Pancreas (tissue), 10 donors: ENCODE measurements at regions of chr4 and their contacts with region 1.

Region 1: GRCh38 chr4:26081795-26082498 is 167.9 kb downstream of the SMIM20 start:
- DNase-seq: no peak
- ATAC-seq: peak; percentile 49 to 73 (median 72)
- H3K4me3 ChIP-seq: no peak overlapping the region
- H3K27ac ChIP-seq: no peak overlapping the region
- H3K4me1 ChIP-seq: peaks cover 0 to 12% (median 0%) of the 10 kb centered on the region in 3 donors
- H3K27me3 ChIP-seq: no peaks in the 10 kb centered on the region
- CTCF ChIP-seq: peak; percentile 37 to 81 (median 66)

Region 2: DNA sequence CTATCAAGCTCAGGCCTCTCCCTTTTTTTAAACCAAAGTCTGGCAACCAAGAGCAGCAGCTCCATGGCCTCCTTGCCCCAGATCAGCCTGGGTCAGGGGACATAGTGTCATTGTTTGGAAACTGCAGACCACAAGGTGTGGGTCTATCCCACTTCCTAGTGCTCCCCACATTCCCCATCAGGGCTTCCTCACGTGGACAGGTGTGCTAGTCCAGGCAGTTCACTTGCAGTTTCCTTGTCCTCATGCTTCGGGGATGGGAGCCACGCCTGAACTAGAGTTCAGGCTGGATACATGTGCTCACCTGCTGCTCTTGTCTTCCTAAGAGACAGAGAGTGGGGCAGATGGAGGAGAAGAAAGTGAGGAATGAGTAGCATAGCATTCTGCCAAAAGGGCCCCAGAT is 404.8 kb before region 1 on chr4:
- intact Hi-C with region 1: no loop called
- DNase-seq: no peak
- ATAC-seq: no peak
- H3K4me3 ChIP-seq: no peak overlapping the region
- H3K27ac ChIP-seq: no peak overlapping the region
- H3K4me1 ChIP-seq: no peaks in the 10 kb centered on the region
- H3K27me3 ChIP-seq: no peaks in the 10 kb centered on the region
- CTCF ChIP-seq: no peak

Region 3: GRCh38 chr4:25884031-25884782 is 197.7 kb before region 1 on chr4:
- intact Hi-C with region 1: no loop called
- DNase-seq: no peak
- ATAC-seq: peak in 1 of 4 donors; percentile 22
- H3K4me3 ChIP-seq: no peak overlapping the region
- H3K27ac ChIP-seq: no peak overlapping the region
- H3K4me1 ChIP-seq: no peaks in the 10 kb centered on the region
- H3K27me3 ChIP-seq: no peaks in the 10 kb centered on the region
- CTCF ChIP-seq: no peak

Region 4: DNA sequence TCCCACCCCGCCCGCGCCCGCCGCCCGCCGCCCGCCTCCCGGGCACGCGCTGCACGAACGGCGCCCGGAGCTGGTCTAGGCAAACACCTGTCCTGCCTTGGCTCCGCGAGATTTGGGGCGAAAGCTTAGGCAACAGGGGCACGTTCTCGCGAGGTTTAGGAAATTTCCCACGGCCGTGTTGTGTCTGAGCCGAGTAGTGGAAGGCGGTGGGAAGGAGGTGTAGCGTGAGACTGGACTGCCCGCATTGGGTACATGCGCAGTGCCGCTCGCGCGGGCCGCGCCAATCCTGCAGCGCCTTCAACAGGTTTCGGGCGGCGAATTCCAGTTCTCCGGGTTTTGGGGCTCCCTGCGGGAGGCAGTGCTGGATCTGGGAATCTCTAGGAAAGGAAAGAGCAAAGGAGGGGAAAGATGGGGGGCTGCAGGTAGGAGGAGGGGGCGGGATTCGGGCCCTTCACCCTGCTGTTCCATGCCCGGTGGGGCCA is 237.6 kb after region 1 on chr4:
- intact Hi-C with region 1: loop called in 1 of 3 experiments (anchors 10 kb)
- DNase-seq: peak; percentile 96 to 100 (median 99)
- ATAC-seq: peak; percentile 81 to 91 (median 89)
- H3K4me3 ChIP-seq: peak overlapping the region; percentile 53 to 68 (median 56)
- H3K27ac ChIP-seq: peak overlapping the region; percentile 77 to 94 (median 89)
- H3K4me1 ChIP-seq: peaks cover 10 to 21% (median 19%) of the 10 kb centered on the region in 3 donors
- H3K27me3 ChIP-seq: no peaks in the 10 kb centered on the region
- CTCF ChIP-seq: no peak

Region 5: GRCh38 chr4:26400132-26400531 is 318.2 kb after region 1 on chr4:
- intact Hi-C with region 1: no loop called
- DNase-seq: no peak
- ATAC-seq: peak in 1 of 4 donors; percentile 16
- H3K4me3 ChIP-seq: no peak overlapping the region
- H3K27ac ChIP-seq: no peak overlapping the region
- H3K4me1 ChIP-seq: peaks cover 0 to 5% (median 4%) of the 10 kb centered on the region in 3 donors
- H3K27me3 ChIP-seq: no peaks in the 10 kb centered on the region
- CTCF ChIP-seq: no peak

Region 6: GRCh38 chr4:26410385-26411293 is 328.7 kb after region 1 on chr4:
- intact Hi-C with region 1: loop called in 1 of 3 experiments (anchors 5 kb)
- DNase-seq: peak in 1 of 6 donors; percentile 36
- ATAC-seq: peak in 3 of 4 donors; percentile 57 to 70 (median 65)
- H3K4me3 ChIP-seq: no peak overlapping the region
- H3K27ac ChIP-seq: no peak overlapping the region
- H3K4me1 ChIP-seq: peaks cover 0 to 20% (median 15%) of the 10 kb centered on the region in 3 donors
- H3K27me3 ChIP-seq: no peaks in the 10 kb centered on the region
- CTCF ChIP-seq: peak in 3 of 4 donors; percentile 39 to 47 (median 46)